HepG2 (cell line): ENCODE measurements at regions of chr3 and their contacts with region 1.

Region 1: DNA sequence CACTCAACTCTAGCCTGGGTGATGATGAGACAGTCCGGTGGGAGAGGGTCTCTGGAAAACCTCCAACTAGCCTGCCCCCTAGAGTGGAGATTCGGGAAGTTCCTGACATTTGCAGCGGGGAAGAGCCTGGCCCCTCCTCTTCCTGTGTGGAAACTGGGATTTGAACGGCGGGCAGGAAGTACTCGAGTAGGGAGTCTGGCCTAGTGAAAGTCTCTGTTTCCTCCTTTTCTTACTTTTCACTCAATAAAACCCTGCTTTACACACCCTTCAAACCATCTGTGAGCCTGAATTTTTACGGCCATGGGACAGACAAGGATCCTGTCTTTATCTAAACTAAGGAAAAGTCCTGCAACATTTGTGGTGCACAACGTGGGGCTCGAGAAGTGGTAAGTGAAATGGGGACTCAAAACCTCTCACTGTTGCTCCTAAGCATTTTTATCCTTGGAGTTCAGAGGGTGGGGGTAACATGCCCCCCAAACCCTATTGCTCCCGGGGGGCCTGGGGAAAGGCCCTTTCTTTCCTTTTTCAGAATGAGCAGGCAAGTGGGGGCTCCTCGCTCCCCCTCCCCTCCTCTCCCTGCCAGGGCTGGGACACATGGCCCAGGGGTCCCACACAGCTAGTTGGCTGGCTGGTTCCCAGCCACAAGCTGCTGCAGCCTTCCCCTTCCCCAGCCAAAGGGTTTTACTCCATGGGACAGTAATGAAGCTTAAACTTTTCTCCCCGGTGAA is 224.7 kb upstream of the GBE1 start:
- DNase-seq: peak; percentile 74
- ATAC-seq: peak; percentile 98
- H3K4me3 ChIP-seq: peak overlapping the region; percentile 76 to 83 (median 76)
- H3K27ac ChIP-seq: peak overlapping the region; percentile 85
- H3K4me1 ChIP-seq: peaks cover 4% of the 10 kb centered on the region; the same call in 1 of the 2 replicates
- H3K27me3 ChIP-seq: no peaks in the 10 kb centered on the region
- CTCF ChIP-seq: peak; percentile 82
- EP300 ChIP-seq: no peak
- POLR2A ChIP-seq: peak; percentile 61 to 78
- RAD21 ChIP-seq: no peak; the same call in 1 of the 2 replicates

Region 2: DNA sequence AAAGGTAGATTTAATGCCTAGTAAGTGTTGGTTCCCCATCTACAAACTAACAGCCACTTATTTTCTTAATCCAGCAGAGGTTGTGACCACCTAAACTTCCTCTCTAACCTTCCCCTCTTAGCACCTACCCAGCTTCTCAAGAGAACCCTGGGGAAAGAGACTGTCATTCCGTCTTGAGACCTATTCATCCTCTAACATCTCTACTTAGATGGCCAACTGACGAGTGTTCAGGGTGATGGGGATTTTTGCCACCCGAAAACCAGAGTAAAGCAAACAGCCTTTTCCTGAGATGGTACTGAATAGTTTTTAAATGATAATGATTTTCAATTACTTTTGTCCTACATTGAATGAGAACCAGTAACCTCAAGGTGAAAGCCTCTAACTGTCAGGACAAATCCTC is 215.4 kb before region 1 on chr3:
- CTCF ChIA-PET with region 1: no interaction called
- POLR2A ChIA-PET with region 1: no interaction called
- in situ Hi-C with region 1: no loop called
- intact Hi-C with region 1: loop called (anchors 5 kb)
- DNase-seq: no peak
- ATAC-seq: no peak
- H3K4me3 ChIP-seq: no peak overlapping the region
- H3K27ac ChIP-seq: no peak overlapping the region
- H3K4me1 ChIP-seq: no peaks in the 10 kb centered on the region
- H3K27me3 ChIP-seq: no peaks in the 10 kb centered on the region
- CTCF ChIP-seq: no peak
- EP300 ChIP-seq: no peak
- POLR2A ChIP-seq: no peak
- RAD21 ChIP-seq: no peak

Region 3: GRCh38 chr3:81910244-81910852 is 75.8 kb before region 1 on chr3:
- CTCF ChIA-PET with region 1: no interaction called
- POLR2A ChIA-PET with region 1: no interaction called
- in situ Hi-C with region 1: no loop called
- intact Hi-C with region 1: loop called (anchors 5 kb)
- DNase-seq: peak; percentile 46
- ATAC-seq: peak; percentile 73
- H3K4me3 ChIP-seq: no peak overlapping the region
- H3K27ac ChIP-seq: no peak overlapping the region
- H3K4me1 ChIP-seq: no peaks in the 10 kb centered on the region
- H3K27me3 ChIP-seq: no peaks in the 10 kb centered on the region
- CTCF ChIP-seq: peak; percentile 73
- EP300 ChIP-seq: no peak
- POLR2A ChIP-seq: no peak
- RAD21 ChIP-seq: no peak